GM10248 (cell line): ENCODE measurements at regions of chr1 and their contacts with region 1.

Region 1: DNA sequence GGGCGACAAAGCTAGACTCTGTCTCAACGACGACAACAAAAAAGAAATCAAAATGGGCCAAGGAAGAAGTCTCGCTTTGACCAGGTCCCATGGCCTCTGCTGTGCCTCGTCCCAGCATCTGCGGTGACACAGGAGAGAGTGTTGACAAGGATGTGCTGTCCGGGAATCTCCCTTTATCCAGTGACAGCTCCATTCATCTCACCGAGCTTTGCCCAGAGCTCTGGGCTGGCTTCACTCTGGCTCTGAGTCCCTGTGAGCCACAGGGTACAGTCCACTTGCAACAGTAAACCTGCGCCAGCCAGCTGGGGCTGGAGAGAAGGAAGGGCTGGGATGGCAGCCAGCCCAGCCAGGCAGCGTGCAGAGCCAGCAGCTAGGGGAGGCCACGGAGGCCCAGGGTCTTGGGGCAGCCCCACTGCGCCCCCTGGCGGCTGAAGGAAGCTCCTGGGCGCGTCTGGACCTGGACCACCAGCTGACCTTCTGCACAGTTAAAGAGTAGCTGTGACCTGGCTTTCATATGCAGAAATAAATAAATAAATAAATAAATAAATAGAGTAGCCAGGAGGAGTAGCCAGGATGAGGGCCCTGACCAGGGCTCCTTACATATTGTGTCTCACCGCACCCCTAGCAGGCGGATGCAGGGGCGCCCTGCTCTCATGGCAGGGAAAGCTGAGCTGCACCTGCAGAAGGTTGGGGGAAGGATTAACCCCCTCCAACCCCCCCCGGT is 29.7 kb downstream of the ENO1 start:
- DNase-seq: peak; percentile 91
- CTCF ChIP-seq: peak; percentile 85

Region 2: GRCh38 chr1:8560611-8561544 is 287.9 kb before region 1 on chr1:
- CTCF ChIA-PET with region 1: interaction called, 134 read pairs
- POLR2A ChIA-PET with region 1: no interaction called
- DNase-seq: peak; percentile 37
- CTCF ChIP-seq: peak; percentile 86

Region 3: DNA sequence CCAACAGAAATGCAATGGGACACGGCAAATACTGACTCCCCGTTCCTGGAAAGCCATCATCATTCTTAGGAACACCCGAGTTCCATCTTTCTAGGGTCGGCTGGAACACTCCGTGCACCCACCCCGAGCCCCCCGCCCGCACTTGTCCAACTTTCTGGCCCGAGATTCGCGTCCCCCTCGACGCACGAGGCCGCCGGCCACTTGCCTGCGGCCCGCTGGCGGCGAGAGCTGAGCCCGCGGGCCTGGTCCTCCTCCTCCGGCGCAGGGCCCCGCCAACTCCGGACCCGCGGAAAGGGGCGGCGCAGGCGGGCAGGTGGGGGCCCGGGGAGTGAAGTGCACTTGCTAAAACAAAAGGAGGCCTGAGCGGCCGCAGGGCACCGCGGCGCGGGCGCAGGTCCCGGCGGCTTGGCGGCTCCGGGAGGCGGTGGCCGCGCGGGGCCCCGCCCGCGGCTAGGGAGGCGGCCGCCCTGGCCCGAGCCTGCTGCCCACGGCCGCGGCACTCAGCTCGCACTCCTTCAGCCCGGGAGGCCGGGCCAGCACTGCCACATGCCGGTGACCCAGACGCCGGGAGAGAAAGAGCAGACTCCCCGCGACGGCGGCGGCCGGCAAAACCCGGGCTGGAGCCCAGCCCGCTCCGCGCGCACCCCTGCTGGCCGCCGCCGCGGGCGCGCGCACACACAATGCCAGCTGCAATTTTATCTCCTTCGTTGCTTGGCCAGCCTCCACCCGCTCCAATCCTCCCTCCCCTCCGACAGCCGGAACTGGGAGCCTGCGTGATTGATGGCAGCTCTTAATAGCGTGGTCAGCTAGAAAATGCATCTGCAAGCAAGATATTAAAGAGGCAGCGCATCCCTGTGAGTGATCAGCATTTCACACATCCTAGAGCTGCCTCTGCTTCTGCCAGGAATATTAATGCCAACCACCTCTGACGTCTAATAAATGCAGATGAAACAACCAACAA is 145.7 kb before region 1 on chr1:
- CTCF ChIA-PET with region 1: interaction called, 11 read pairs
- POLR2A ChIA-PET with region 1: no interaction called
- DNase-seq: peak; percentile 88
- CTCF ChIP-seq: peak; percentile 39

Region 4: GRCh38 chr1:8727809-8728213 is 121.0 kb before region 1 on chr1:
- CTCF ChIA-PET with region 1: interaction called, 34 read pairs
- POLR2A ChIA-PET with region 1: no interaction called
- DNase-seq: peak; percentile 31
- CTCF ChIP-seq: no peak

Region 5: GRCh38 chr1:8831340-8831739 is 17.5 kb before region 1 on chr1:
- CTCF ChIA-PET with region 1: interaction called, 145 read pairs
- POLR2A ChIA-PET with region 1: interaction called, 5 read pairs
- DNase-seq: no peak
- CTCF ChIP-seq: no peak

Region 6: DNA sequence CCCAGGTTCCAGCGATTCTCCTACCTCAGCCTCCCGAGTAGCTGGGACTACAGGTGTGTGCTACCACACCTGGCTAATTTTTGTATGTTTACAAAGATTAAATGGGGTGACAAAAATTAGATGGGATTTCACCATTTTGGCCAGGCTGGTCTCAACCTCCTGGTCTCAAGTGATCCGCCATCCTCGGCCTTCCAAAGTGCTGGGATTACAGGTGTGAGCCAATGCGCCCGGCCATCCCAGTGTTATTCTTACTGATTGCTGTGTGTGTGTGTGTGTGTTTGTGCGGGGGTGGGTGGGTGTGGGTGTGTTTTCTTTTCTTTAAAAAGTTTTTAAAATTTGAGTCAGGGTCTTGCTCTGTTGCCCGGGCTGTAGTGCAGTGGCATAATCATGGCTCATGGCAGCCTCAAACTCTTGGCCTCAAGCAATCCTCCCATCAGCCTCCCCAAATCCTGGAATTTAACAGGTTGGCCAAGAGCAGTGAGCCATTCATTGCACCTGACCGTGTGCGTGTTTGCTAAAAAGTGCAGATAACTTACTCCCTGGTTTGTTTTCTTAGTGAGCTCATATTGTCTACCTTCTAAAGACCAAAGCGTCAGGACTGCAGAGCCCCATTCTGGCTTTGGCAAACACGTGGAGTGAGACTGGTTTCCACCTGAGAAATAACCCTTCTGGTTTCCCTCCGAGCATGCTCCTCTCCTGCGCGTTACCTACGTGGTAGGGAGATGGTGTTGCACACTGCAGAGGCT is 64.5 kb after region 1 on chr1:
- CTCF ChIA-PET with region 1: no interaction called
- POLR2A ChIA-PET with region 1: no interaction called
- DNase-seq: no peak
- CTCF ChIP-seq: no peak

Region 7: GRCh38 chr1:9004700-9005394 is 156.0 kb after region 1 on chr1:
- CTCF ChIA-PET with region 1: interaction called, 11 read pairs
- POLR2A ChIA-PET with region 1: no interaction called
- DNase-seq: peak; percentile 91
- CTCF ChIP-seq: peak; percentile 93